Left colon (tissue), 2 donors: ENCODE measurements at regions of chr12 and their contacts with region 1.

Region 1: DNA sequence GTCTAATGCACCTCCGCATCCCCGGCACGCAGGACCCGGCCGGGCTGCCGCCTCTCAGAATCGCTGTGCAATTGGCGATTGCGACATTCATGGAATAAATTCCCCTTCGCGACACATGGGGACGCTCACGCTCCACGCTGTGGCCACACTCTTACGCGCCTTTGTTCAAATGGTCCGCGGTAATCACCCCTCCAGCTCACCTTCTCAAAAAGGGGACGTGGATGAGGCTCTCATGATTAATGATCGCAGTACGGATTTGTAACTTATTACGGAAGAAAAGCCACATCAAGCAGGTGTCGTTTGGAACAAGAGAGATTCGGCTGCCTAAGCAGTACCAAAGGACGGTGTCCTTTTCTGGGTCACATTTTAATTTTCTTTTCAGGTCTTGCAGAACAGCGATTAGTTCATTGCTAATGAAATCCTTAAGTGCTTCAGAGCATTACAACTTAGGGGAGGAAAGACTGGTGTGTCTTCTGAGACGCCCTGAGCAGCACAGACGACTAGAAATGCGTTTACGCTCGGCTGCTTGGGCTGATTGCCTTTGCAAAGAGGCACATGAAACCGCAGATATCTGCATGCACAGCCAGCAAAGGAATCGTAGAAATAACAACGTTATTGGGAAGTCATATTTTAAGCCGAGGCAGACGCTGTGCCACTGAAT is 37.3 kb upstream of the ADGRD1 start:
- DNase-seq: peak in 1 of 2 donors; percentile 26
- ATAC-seq: no peak

Region 2: DNA sequence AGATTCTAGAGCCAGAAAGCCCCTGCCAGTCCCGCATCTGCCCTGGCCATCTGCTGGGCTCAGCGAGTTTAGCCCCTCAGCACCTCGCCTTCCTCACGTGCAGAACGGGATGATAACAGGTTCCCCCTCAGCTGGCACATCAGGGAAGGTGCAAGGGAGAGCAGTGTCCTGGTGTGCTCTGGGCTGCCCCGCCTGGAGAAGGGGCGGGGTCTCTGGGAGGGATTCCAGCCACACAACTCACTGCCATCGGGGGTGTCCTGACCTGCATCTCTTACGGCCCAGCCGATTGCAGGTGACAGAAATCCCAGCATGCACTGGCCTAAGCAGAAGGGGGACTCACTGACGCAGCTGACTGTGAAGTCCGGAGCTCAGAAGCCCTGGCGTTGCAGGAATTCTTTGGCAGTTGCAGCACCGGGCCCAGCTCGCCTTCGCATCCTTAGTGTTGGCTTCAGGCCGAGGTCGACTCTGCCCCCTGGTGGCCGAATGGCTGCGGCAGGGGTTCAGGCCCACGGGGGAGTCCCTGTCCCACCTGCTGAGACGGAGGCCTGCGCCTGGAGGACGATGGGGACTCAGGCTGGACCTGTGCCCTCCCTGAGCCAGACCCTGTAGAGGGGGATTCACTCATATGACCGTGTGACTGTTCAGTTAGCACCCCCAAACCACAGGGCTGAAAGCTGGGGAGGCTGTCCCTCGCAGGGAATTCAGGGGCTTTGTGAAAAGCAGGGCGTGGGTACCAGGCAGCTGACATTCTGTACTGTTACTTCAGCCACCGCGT is 215.9 kb after region 1 on chr12:
- intact Hi-C with region 1: loop called in 1 of 2 experiments (anchors 10 kb)
- DNase-seq: peak; percentile 45 to 73
- ATAC-seq: peak; percentile 43